Colonic mucosa (tissue), 4 donors: ENCODE measurements at regions of chr2 and their contacts with region 1.

Region 1: GRCh38 chr2:130160131-130160530 is 15.2 kb upstream of the CCDC74B start:
- DNase-seq: no peak
- H3K4me3 ChIP-seq: no peak overlapping the region
- H3K27ac ChIP-seq: no peak overlapping the region
- H3K4me1 ChIP-seq: no peaks in the 10 kb centered on the region
- H3K27me3 ChIP-seq: no peaks in the 10 kb centered on the region
- CTCF ChIP-seq: no peak

Region 2: GRCh38 chr2:129627437-129627836 is 532.7 kb before region 1 on chr2:
- intact Hi-C with region 1: no loop called
- DNase-seq: no peak
- H3K4me3 ChIP-seq: no peak overlapping the region
- H3K27ac ChIP-seq: no peak overlapping the region
- H3K4me1 ChIP-seq: no peaks in the 10 kb centered on the region
- H3K27me3 ChIP-seq: no peaks in the 10 kb centered on the region
- CTCF ChIP-seq: no peak

Region 3: GRCh38 chr2:131509615-131510014 is 1349.5 kb after region 1 on chr2:
- intact Hi-C with region 1: loop called (anchors 10 kb)
- DNase-seq: no peak
- H3K4me3 ChIP-seq: no peak overlapping the region
- H3K27ac ChIP-seq: no peak overlapping the region
- H3K4me1 ChIP-seq: no peaks in the 10 kb centered on the region
- H3K27me3 ChIP-seq: no peaks in the 10 kb centered on the region
- CTCF ChIP-seq: no peak